Cardiac septum (tissue), 1 donor: ENCODE measurements at regions of chr1 and their contacts with region 1.

Region 1: DNA sequence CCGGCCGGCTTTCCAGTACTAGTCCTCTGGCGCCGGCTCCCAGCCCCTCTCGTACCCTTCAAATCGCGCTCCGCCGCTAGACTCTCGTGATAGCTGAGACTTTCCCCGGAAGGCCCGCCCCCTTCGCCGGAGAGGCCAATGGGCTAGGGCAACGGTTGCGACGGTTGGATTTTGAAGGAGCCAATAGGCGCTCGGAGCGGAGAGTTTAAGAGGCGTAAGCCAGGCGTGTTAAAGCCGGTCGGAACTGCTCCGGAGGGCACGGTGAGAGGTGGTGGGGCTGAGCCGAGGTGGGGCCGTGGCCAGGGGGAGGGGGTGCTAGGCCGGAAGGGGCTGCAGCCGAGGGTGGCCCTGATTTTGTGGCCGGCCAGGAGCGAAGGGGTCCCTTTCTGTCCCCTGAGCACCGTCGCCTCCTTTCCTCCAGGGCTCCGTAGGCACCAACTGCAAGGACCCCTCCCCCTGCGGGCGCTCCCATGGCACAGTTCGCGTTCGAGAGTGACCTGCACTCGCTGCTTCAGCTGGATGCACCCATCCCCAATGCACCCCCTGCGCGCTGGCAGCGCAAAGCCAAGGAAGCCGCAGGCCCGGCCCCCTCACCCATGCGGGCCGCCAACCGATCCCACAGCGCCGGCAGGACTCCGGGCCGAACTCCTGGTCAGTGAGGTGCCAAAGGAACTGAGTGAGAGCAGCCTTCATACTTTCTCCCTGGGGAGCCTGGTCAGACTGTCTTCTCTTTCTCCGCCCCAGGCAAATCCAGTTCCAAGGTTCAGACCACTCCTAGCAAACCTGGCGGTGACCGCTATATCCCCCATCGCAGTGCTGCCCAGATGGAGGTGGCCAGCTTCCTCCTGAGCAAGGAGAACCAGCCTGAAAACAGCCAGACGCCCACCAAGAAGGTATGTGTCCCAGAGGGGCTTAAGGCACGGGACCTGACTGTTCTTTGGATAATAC is at the start of gene CDC20:
- DNase-seq: peak; percentile 99
- total RNA-seq, gene CDC20: 0.78 TPM

Region 2: GRCh38 chr1:43171876-43172526 is 187.0 kb before region 1 on chr1 and contains the starts of genes CFAP57 and EBNA1BP2:
- intact Hi-C with region 1: no loop called
- DNase-seq: peak; percentile 95
- total RNA-seq, gene CFAP57: 0.13 TPM
- total RNA-seq, gene EBNA1BP2: 26.7 TPM

Region 3: DNA sequence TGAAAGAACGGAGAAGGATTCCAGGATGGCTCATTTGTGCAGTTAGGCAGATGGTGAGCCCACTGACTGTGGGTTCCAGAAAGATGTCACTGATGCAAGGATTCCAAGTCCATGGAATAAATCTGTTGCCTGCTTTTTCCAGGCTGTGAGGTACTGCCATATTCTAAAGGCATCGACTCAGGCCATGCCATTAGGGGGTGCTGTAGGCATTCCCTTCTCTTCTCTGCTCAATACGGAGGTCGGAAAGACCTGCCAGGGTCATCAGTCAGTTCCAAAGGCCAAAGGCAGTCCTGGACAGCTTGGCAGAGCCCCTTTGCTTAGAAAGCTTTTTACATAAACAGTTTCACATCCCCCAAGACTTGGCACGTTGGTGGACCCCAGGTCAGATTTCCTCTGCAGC is 120.9 kb before region 1 on chr1:
- intact Hi-C with region 1: loop called (anchors 5 kb)
- DNase-seq: no peak